ENCODE measurements at regions of chr11 and their contacts with region 1.

Region 1: GRCh38 chr11:12043959-12044819 is 35.8 kb upstream of the DKK3 start:
- DNase-seq: peak; percentile 88 to 90
- ATAC-seq: peak; percentile 81 to 89 (median 86)
- H3K4me3 ChIP-seq: peak overlapping the region; percentile 5
- H3K27ac ChIP-seq: peak overlapping the region; percentile 62
- H3K4me1 ChIP-seq: peaks cover 14% of the 10 kb centered on the region
- H3K27me3 ChIP-seq: no peaks in the 10 kb centered on the region
- CTCF ChIP-seq: peak; percentile 94

Region 2: DNA sequence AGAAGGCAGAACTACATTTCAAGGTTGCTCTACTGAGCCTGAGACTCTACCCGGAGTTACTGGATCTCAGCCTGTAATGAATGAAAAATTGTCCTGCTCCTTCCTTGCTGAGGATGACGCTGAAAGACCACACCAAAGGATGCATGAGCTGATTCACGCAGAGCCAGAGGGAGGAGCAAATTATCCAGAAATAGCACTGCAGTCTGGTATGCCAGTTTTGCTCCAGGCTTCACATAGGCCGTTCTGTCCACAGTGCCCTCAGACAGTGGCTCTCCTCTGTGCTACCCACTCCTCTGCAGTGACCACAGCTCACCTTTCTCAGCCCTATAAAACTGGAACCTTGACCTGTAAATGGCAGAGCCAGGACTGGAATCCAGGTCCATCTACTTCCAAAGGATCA is 343.1 kb before region 1 on chr11:
- intact Hi-C with region 1: loop called in 1 of 2 experiments (anchors 5 kb)
- DNase-seq: no peak
- ATAC-seq: peak; percentile 82 to 95 (median 90)
- H3K4me3 ChIP-seq: no peak overlapping the region
- H3K27ac ChIP-seq: no peak overlapping the region
- H3K4me1 ChIP-seq: peaks cover 8% of the 10 kb centered on the region
- H3K27me3 ChIP-seq: no peaks in the 10 kb centered on the region
- CTCF ChIP-seq: peak; percentile 17

Region 3: DNA sequence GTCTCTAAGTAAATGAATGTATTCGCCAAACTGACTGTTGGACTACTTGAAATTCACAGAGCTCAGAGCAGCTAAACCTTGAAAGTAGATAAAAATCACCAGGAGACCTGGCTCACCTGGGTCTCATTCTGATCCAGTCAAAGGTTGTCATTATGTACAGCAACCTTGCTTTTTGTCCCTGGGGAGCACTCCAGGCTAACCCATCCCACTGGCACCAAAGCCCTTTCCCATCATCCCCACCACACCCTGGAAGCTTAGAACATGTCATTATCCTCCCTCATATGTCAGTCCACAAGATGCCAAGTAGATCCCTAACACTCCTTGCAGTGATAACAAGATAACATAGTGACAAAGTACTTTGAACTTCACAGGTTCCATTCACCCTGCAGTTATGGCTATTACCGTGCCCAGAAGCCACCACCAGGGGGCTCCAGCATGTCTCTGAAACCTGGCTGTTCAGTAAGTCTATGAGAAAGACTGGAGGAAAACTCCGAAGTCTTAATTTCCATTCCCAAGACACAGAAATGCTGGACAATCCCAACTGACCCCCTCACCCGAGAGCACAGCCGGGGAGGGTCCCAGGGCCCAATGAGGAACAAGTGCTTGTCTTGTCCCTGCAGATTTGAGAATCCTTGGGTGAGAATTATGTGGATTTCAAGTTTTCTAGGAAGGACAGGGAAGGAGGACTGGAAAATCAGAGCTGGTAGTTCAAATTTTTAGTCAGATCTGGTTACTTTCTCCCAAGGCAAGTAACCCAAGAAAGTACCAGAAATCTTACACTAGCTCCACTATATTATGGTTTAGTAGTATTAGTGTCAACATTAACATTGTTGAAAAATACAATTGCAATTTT is 245.4 kb before region 1 on chr11:
- intact Hi-C with region 1: loop called (anchors 5 kb)
- DNase-seq: peak; percentile 84 to 90
- ATAC-seq: peak; percentile 74 to 99 (median 94)
- H3K4me3 ChIP-seq: no peak overlapping the region
- H3K27ac ChIP-seq: no peak overlapping the region
- H3K4me1 ChIP-seq: no peaks in the 10 kb centered on the region
- H3K27me3 ChIP-seq: peaks cover 0 to 9% (median 3%) of the 10 kb centered on the region in 3 donors
- CTCF ChIP-seq: peak; percentile 72

Region 4: GRCh38 chr11:11931461-11932055 is 112.6 kb before region 1 on chr11:
- intact Hi-C with region 1: loop called (anchors 1 to 5 kb)
- DNase-seq: no peak
- ATAC-seq: peak; percentile 32 to 76 (median 71)
- H3K4me3 ChIP-seq: no peak overlapping the region
- H3K27ac ChIP-seq: no peak overlapping the region
- H3K4me1 ChIP-seq: no peaks in the 10 kb centered on the region
- H3K27me3 ChIP-seq: no peaks in the 10 kb centered on the region
- CTCF ChIP-seq: peak; percentile 62

Region 5: DNA sequence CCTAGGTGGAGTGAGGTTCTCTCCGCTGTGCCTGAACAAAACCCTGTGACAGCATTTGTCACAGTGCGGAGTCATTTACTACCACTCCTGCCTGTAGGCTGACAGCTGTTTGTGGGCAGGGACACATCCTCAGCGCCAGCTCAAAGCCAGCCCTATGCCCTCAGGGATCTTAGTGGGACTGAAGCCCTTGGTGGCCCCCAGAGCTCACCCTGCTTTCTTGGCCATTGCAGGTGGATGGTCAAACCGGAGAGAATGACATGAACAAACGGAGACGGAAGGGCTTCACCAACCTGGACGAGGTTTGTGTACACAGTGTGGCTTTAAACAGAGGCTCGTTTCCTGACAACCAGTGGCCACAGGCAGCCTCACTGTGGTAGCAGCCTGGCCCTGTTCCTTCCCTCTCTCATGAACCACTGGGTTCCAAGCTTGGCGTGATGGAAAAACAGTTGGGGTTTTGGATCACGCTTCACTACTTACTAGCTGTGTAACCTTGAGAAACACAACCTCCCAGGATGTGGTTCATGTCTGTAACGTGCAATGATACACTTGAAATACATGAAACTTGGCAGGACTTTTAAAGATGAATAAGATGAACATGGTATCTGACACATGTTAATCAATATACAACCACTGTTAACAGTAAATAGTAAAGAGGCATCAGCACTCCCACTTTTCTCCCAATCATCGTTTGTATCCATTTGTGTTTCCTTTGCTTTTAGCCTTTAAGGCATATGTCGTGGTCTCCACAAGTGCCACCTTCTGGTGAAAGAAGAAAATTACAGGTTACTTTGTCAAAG is 192.0 kb after region 1 on chr11:
- intact Hi-C with region 1: loop called (anchors 2 kb)
- DNase-seq: no peak
- ATAC-seq: peak; percentile 85 to 90 (median 87)
- H3K4me3 ChIP-seq: no peak overlapping the region
- H3K27ac ChIP-seq: peak overlapping the region; percentile 74
- H3K4me1 ChIP-seq: peaks cover 18% of the 10 kb centered on the region
- H3K27me3 ChIP-seq: no peaks in the 10 kb centered on the region
- CTCF ChIP-seq: peak; percentile 75

Region 6: GRCh38 chr11:12281571-12282478 is 237.6 kb after region 1 on chr11:
- intact Hi-C with region 1: loop called (anchors 1 kb)
- DNase-seq: peak; percentile 81 to 90
- ATAC-seq: peak; percentile 78 to 92 (median 84)
- H3K4me3 ChIP-seq: no peak overlapping the region
- H3K27ac ChIP-seq: no peak overlapping the region
- H3K4me1 ChIP-seq: peaks cover 4% of the 10 kb centered on the region
- H3K27me3 ChIP-seq: no peaks in the 10 kb centered on the region
- CTCF ChIP-seq: peak; percentile 98

Measured in psoas muscle (tissue), 8 donors.